Activated naive CD4-positive, alpha-beta T cell treated with anti-CD3 and anti-CD28 coated beads for 36 hours (primary cell): ENCODE measurements at regions of chr9 and their contacts with region 1.

Region 1: GRCh38 chr9:84397151-84397728 is 56.7 kb upstream of the SLC28A3 start:
- DNase-seq: peak; percentile 77
- H3K4me3 Mint-ChIP-seq: no peak overlapping the region
- H3K27ac Mint-ChIP-seq: no peak overlapping the region
- H3K4me1 Mint-ChIP-seq: no peaks in the 10 kb centered on the region
- H3K27me3 Mint-ChIP-seq: peaks cover 5% of the 10 kb centered on the region

Region 2: DNA sequence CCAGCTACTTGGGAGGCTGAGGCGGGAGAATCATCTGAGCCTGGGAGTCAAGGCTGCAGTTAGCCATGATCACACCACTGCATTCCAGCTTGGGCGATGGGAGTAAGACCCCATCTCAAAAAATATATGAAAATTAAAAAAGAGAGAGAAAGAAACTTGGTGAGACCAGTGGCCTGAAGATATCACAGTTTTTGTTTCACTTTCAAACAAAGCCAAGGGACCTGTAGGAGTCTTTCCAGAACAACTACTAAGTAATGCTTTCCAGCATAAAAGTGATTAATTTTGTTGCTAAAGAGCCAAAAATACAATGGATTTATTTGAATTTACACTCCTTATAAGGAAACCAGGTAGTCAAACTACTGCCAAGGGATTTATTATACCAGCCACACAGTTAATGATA is 603.2 kb before region 1 on chr9:
- CTCF ChIA-PET with region 1: no interaction called
- intact Hi-C with region 1: no loop called
- DNase-seq: no peak
- H3K4me3 Mint-ChIP-seq: no peak overlapping the region
- H3K27ac Mint-ChIP-seq: no peak overlapping the region
- H3K4me1 Mint-ChIP-seq: no peaks in the 10 kb centered on the region
- H3K27me3 Mint-ChIP-seq: no peaks in the 10 kb centered on the region

Region 3: DNA sequence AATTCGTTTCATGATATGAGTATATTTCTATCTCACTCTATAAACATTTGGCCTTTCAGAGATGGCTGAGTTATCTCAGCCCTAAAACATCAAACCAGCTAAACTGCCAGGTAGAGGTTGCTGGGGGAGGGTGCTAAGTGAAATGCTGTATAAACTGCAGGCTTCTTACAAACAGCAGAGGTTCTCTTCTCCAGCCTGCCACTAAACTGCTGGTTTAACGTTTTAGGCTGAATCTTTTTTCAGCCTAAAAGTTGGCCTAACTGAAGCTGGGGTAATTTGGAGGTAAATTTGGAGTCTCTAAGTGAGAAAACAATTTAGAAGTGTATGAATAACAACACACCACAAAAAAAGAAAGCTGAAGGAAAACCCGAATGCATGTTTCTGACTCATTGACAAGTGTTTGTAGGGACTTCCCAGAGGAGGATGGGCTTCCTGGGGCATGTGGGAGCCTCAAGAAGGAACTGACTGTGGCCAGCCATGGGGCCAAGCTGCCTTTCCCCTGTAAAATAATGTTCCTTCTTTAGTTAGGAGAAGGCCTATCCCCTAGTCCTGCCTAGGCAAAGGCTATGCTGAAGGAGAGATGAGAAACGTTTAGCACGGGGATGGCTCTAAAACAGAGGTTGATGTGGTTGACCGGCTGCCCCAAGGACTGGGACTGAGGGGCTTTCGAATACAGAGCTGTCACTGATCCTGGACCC is 100.9 kb before region 1 on chr9:
- CTCF ChIA-PET with region 1: no interaction called
- intact Hi-C with region 1: no loop called
- DNase-seq: peak; percentile 83
- H3K4me3 Mint-ChIP-seq: peak overlapping the region; percentile 52
- H3K27ac Mint-ChIP-seq: peak overlapping the region; percentile 99
- H3K4me1 Mint-ChIP-seq: peaks cover 60% of the 10 kb centered on the region
- H3K27me3 Mint-ChIP-seq: no peaks in the 10 kb centered on the region

Region 4: DNA sequence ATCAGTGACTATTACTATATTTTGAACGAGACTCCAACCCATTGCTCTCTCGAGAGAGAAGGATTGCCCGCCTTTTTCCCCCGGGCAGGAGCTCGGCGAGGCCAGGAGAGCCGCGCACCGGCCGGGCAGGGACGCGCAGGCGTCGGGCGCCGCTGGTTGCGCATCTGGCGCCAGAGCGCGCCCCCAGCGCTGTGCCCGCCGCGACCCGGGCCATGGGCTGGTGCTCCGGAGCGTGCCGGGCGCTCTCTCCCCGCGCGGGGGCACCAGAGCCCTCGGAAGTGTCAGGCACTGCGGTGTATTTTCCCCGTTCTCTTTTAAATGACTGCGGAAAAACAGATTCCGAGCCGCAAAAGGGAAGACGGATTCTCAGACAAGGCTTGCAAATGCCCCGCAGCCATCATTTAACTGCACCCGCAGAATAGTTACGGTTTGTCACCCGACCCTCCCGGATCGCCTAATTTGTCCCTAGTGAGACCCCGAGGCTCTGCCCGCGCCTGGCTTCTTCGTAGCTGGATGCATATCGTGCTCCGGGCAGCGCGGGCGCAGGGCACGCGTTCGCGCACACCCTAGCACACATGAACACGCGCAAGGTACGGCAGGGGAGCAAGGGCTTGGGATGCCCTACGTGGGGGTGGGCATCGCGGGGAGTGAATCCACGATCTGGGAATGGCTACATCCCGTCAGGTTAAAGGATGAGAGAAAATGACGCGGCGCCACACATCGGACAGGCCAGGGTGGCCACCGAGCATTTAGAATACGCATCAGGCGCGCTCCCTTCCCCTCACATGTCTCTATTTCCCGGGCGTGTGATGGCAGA is 271.2 kb after region 1 on chr9:
- CTCF ChIA-PET with region 1: interaction called, 4 read pairs
- intact Hi-C with region 1: loop called (anchors 2 kb)
- DNase-seq: peak; percentile 55
- H3K4me3 Mint-ChIP-seq: peak overlapping the region; percentile 22
- H3K27ac Mint-ChIP-seq: no peak overlapping the region
- H3K4me1 Mint-ChIP-seq: peaks cover 10% of the 10 kb centered on the region
- H3K27me3 Mint-ChIP-seq: peaks cover 49% of the 10 kb centered on the region

Region 5: DNA sequence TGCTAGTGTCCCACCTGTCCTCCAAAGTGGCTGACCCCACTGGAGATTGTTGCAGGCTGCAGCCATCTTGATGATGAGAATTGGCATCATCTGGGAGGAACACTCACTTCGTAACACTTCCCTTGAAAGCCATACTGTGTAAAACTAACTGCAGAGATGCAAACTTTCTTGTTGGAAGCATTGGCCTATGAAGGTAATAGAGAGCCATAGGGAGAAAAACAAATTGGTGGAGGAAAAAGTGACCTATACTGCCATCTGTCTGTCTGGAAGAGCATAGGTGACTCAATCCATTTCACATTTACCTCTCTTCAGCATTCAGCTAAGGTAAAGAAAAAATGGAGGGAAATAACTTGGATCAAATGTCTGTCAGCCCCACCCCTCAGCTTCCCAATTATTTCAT is 745.7 kb after region 1 on chr9:
- CTCF ChIA-PET with region 1: interaction called, 3 read pairs
- intact Hi-C with region 1: loop called (anchors 1 kb)
- DNase-seq: no peak
- H3K4me3 Mint-ChIP-seq: no peak overlapping the region
- H3K27ac Mint-ChIP-seq: no peak overlapping the region
- H3K4me1 Mint-ChIP-seq: no peaks in the 10 kb centered on the region
- H3K27me3 Mint-ChIP-seq: peaks cover 4% of the 10 kb centered on the region

Region 6: DNA sequence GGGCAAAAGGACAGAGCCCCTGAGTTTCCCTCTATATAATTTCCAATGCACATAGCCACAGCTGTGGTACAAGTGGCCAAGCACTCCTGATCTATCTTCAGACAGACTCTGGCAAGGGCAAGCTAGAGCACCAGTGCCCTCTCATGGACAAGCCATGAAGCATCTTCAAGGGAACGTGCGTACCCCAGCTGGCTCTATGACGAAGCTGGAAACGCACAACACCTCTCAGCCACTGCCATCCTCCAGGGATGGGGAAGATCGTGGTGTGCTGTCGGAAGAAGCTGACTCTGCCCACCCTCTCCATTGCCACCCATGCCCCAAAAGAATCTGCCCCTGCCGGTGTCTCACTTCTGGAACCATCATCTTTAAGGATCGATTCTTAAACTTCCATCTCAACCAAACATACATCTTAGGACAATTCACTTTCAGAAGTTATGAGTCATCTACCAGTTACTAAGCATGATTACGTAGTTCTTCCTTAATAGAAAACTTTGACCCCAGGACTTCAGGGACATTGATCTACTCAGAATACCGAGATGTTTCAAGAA is 861.7 kb after region 1 on chr9:
- CTCF ChIA-PET with region 1: interaction called, 3 read pairs
- intact Hi-C with region 1: loop called (anchors 1 kb)
- DNase-seq: peak; percentile 39
- H3K4me3 Mint-ChIP-seq: no peak overlapping the region
- H3K27ac Mint-ChIP-seq: no peak overlapping the region
- H3K4me1 Mint-ChIP-seq: no peaks in the 10 kb centered on the region
- H3K27me3 Mint-ChIP-seq: peaks cover 10% of the 10 kb centered on the region

Region 7: DNA sequence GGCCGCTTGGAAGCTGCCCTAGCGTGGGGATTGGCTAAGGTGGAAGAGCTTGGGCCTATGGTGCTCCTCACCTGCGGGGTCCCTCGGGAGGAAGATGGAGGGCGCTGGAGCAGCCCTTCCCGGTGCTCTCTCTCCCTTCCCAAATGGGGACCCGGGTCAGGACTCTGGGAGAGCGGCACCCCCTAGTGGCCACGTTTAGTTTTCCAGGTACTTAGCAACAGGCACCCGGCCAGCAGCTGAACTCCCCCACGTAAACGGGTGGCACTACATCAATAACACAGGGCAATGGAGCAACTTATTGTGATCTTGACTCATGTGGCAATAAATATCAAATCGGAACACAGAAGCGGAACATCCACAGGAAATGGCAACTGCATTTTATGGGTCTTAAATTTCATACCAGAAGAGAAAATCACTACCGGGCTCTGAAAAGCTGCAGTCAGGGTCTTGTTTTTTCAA is 1027.9 kb after region 1 on chr9:
- CTCF ChIA-PET with region 1: interaction called, 4 read pairs
- intact Hi-C with region 1: loop called (anchors 2 kb)
- DNase-seq: peak; percentile 69
- H3K4me3 Mint-ChIP-seq: no peak overlapping the region
- H3K27ac Mint-ChIP-seq: no peak overlapping the region
- H3K4me1 Mint-ChIP-seq: no peaks in the 10 kb centered on the region
- H3K27me3 Mint-ChIP-seq: peaks cover 19% of the 10 kb centered on the region

Region 8: GRCh38 chr9:85610074-85610860 is 1213.0 kb after region 1 on chr9:
- CTCF ChIA-PET with region 1: interaction called, 11 read pairs
- intact Hi-C with region 1: loop called (anchors 2 kb)
- DNase-seq: peak; percentile 53
- H3K4me3 Mint-ChIP-seq: peak overlapping the region; percentile 17
- H3K27ac Mint-ChIP-seq: peak overlapping the region; percentile 74
- H3K4me1 Mint-ChIP-seq: peaks cover 6% of the 10 kb centered on the region
- H3K27me3 Mint-ChIP-seq: no peaks in the 10 kb centered on the region